ENCODE measurements at regions of chr5 and their contacts with region 1.

Region 1: GRCh38 chr5:10457682-10458574 is 16.2 kb downstream of the ROPN1L start:
- DNase-seq: peak in 1 of 42 donors; percentile 7

Region 2: GRCh38 chr5:10521466-10522223 is 63.7 kb after region 1 on chr5:
- intact Hi-C with region 1: loop called (anchors 2 kb)
- DNase-seq: peak in 1 of 42 donors; percentile 14

Region 3: GRCh38 chr5:10627160-10627701 is 169.3 kb after region 1 on chr5:
- intact Hi-C with region 1: loop called (anchors 2 kb)
- DNase-seq: peak in 1 of 42 donors; percentile 30

Region 4: GRCh38 chr5:10655161-10655971 is 197.4 kb after region 1 on chr5:
- intact Hi-C with region 1: no loop called
- DNase-seq: no peak